Right ventricle myocardium superior (tissue), 1 donor: ENCODE measurements at regions of chr1 and their contacts with region 1.

Region 1: DNA sequence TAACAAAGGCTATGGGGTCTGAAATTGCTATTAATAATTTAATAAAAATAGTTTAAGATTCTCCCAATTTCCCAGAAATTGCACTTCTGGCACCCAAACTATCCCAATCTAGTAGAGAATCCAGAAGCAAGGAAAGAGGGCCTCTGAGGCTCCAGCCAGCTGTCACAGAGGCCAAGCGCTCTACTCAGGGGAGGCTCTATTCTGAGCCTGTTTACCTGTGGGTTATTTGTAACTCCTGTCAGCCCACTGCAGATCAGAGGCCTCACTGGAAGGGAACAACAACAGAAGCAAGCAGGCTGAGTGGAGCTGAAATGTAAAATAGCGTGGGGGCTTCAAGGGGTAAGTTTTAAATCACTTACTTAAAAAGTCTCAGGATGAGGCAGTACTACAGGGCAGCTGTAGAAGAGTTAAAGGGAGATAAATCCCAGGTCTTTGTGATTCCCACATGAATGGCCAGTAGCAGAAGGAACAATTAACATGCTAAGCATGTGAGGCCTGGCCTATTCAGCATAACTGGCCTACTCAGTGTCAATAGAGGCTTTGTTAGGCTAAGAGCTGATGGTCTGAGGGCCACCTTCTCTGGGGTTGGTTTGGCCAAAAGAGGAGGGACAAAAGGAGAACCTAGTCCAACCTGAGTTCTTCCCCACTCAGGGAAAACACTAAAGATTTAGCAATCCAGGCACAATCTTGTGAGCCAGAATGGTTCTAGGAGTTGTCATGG is 12.8 kb downstream of the ZNF687 start:
- DNase-seq: no peak
- ATAC-seq: no peak

Region 2: DNA sequence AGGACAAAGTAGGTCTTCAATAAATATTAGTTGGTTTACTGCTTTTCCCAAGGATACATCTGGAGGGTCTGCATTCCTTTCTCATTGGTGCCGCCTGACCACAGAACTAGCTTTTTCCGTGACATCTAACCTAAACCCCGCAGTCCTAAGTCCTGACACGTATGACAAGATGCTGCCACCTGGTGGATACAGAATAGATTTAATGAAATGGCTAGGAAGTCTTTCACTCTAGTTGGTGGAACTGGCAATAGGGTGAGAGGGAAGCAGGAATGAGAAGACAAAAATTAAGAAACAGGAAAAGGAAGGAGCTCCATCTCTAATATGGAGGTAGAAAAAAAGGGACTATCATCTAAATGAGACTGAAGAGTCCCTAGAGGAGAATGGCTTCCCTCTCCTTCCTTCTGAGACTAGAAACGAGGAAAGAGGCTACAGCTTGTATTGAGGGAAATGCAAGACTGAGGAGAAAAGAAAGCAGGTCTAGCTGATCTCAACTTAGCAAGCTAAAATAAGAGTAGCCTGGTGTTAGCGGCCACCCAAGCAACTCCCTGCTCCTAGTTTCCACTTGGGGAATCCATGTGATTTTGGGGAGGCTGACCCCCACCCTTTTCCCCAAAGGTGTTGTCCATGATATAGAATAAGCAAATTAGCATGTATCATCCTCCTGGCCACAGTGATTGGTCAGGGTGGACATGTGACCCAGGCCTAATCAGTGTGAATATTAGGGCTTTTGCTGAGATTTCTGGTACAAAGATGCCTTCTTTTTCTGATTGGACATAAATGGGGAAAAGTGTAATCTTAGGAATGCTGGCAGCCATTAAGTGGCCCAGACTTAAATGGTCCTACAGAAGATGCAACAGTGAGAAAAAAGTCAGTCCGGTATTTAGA is 46.2 kb after region 1 on chr1:
- intact Hi-C with region 1: loop called (anchors 5 kb)
- DNase-seq: no peak
- ATAC-seq: peak; percentile 91

Region 3: GRCh38 chr1:151399890-151400495 is 105.1 kb after region 1 on chr1:
- intact Hi-C with region 1: loop called (anchors 5 kb)
- DNase-seq: no peak
- ATAC-seq: peak; percentile 26

Region 4: DNA sequence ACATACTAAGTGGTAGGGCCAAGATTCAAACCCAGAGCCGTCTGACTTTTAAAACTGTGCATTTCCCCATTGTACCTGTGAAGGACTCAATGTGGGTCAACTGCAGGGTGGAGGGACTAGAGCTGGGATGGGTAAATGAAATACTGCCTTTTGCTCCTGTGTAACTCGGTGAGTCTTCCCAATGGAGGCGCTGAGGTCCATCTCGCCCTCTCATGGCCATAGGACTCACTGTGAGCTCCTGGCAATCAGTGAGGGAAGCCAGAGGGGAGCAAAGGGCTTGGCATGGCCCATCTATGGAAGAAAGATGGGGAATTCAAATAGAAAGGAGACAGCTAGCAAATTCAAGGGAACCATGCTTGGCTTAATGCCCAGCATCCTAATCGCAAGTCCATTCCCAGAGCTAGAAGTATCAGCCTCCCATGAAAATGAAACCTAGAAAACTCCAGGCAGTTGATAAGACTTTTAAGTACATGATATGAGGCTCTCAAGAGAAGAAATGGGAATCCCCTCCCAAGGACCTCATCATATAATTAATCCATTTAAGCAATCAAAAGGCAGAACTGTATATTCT is 190.9 kb after region 1 on chr1:
- intact Hi-C with region 1: no loop called
- DNase-seq: no peak
- ATAC-seq: no peak